B cell (primary cell): ENCODE measurements at regions of chr15 and their contacts with region 1.

Region 1: GRCh38 chr15:75639709-75640482 is at the start of gene IMP3:
- DNase-seq: peak; percentile 96
- ATAC-seq: peak; percentile 93
- H3K4me3 ChIP-seq: peak within 1 kb of the TSS; percentile 72 to 91 (median 84)
- H3K4me3 Mint-ChIP-seq: peak within 1 kb of the TSS; percentile 95
- H3K27ac ChIP-seq: peak within 1 kb of the TSS; percentile 78 to 81
- H3K27ac Mint-ChIP-seq: peak within 1 kb of the TSS; percentile 96
- H3K4me1 ChIP-seq: peaks cover 29 to 36% of the 10 kb centered on the region in 2 donors
- H3K4me1 Mint-ChIP-seq: peaks cover 40% of the 10 kb centered on the region
- H3K27me3 ChIP-seq: peaks cover 0 to 4% (median 0%) of the 10 kb centered on the region in 4 experiments
- H3K27me3 Mint-ChIP-seq: no peaks in the 10 kb centered on the region
- CTCF ChIP-seq: no peak
- total RNA-seq, gene IMP3: 60.8 and 62.9 TPM in 2 replicates

Region 2: DNA sequence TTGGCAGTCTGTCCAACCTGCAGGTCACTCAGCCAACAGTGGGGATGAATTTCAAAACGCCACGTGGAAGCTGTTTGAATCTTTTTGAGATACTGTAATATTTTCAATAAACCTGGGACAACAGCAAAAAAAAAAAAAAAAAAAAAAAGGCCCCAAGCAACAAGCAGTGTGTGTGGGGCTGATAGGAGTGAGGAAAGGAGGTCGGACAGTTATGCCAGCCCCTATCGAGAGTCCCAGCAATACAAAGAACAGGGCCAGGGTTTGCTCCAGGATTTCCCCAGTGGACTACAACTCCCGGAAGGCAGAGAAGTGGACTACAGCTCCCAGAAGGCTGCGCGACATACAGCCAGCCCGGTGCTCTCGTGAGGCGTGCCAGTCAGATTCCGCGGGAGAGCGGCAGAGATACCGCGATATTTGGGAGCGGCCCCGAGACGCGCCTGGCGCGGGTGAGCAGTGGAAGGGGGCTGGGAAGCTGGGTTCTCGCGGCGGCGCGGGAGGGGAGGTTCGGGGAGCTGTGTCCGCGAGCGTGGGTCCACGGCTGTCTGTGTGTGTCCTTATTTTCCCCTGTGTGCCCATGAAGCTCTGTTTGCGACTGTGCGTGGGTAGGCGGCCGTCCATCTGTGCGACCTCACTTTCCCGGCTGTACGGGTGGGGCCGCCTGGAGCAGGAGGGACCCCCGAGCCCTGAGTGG is 616.6 kb before region 1 on chr15 and contains the start of gene PPCDC:
- CTCF ChIA-PET with region 1: no interaction called
- POLR2A ChIA-PET with region 1: no interaction called
- intact Hi-C with region 1: loop called (anchors 10 kb)
- DNase-seq: peak; percentile 93
- ATAC-seq: peak; percentile 100
- H3K4me3 ChIP-seq: peak within 1 kb of the TSS; percentile 72 to 96 (median 94)
- H3K4me3 Mint-ChIP-seq: peak within 1 kb of the TSS; percentile 97
- H3K27ac ChIP-seq: peak within 1 kb of the TSS; percentile 49 to 72
- H3K27ac Mint-ChIP-seq: peak within 1 kb of the TSS; percentile 94
- H3K4me1 ChIP-seq: peaks cover 5 to 18% of the 10 kb centered on the region in 2 donors
- H3K4me1 Mint-ChIP-seq: peaks cover 14% of the 10 kb centered on the region
- H3K27me3 ChIP-seq: peaks cover 0 to 33% (median 15%) of the 10 kb centered on the region in 4 experiments
- H3K27me3 Mint-ChIP-seq: peaks cover 23% of the 10 kb centered on the region
- CTCF ChIP-seq: no peak
- total RNA-seq, gene PPCDC: 14.8 and 15.1 TPM in 2 replicates

Region 3: GRCh38 chr15:75347222-75347878 is 292.5 kb before region 1 on chr15:
- CTCF ChIA-PET with region 1: interaction called, 3 read pairs
- POLR2A ChIA-PET with region 1: no interaction called
- intact Hi-C with region 1: loop called (anchors 1 kb)
- DNase-seq: peak; percentile 97
- ATAC-seq: peak; percentile 80
- H3K4me3 ChIP-seq: peak overlapping the region; percentile 3 to 82 (median 70)
- H3K4me3 Mint-ChIP-seq: peak overlapping the region; percentile 80
- H3K27ac ChIP-seq: peak overlapping the region; percentile 92 to 94
- H3K27ac Mint-ChIP-seq: peak overlapping the region; percentile 94
- H3K4me1 ChIP-seq: peaks cover 31 to 47% of the 10 kb centered on the region in 2 donors
- H3K4me1 Mint-ChIP-seq: peaks cover 45% of the 10 kb centered on the region
- H3K27me3 ChIP-seq: no peaks in the 10 kb centered on the region
- H3K27me3 Mint-ChIP-seq: no peaks in the 10 kb centered on the region
- CTCF ChIP-seq: no peak

Region 4: DNA sequence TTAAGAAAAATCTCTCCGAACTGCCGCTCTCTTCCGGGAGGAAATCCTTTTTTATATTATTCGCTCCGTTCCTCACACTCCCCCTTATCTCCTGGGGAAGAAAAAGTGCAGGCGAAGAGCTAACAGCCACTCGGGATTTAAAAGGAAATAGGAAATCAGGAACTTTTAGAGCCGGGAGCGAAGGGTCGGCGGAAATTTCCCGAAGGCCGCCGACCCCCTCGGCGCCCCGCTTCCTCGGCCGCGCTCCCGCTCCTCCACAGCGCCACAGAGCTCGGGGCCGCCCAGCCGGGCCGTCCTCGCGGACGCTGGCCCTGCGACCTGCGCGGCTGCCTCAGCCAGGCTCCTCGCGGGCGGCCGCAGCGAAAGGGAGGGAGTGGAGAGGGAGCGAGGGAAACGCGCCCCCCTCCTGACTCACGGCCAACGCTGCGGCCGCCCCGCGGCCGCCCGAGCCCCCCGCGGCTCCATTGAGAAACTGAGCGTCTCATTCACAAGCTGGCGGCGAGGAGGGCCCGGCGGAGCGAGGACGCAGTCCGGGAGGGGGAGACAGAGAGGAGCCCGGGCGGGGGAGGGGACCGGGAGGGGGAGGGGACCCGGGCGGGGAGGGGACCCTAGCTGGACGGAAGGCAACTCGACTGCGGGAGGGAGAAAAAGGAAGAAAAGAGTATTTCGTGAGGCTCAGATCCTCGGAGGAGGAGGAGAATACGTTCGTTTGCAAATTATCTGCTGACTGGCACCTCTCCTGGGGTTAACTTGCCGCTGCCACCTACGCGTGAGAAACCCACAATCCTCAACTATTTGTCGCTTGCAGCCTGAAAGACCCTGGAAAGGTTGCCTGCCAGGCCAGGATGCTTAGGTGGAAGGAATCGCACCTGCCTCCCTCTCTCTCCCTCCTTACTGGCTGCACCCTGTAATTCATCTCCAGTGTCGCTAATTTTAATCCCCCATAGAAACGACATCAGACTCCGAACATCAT is 60.7 kb before region 1 on chr15 and contains the start of gene PTPN9:
- CTCF ChIA-PET with region 1: interaction called, 5 read pairs
- POLR2A ChIA-PET with region 1: interaction called, 9 read pairs
- intact Hi-C with region 1: loop called (anchors 1 kb)
- DNase-seq: peak; percentile 74
- ATAC-seq: peak; percentile 83
- H3K4me3 ChIP-seq: peak within 1 kb of the TSS; percentile 67 to 93 (median 70)
- H3K4me3 Mint-ChIP-seq: peak within 1 kb of the TSS; percentile 90
- H3K27ac ChIP-seq: peak within 1 kb of the TSS in 1 of 2 donors; percentile 76
- H3K27ac Mint-ChIP-seq: peak within 1 kb of the TSS; percentile 87
- H3K4me1 ChIP-seq: peaks cover 17 to 18% of the 10 kb centered on the region in 2 donors
- H3K4me1 Mint-ChIP-seq: peaks cover 20% of the 10 kb centered on the region
- H3K27me3 ChIP-seq: no peaks in the 10 kb centered on the region
- H3K27me3 Mint-ChIP-seq: no peaks in the 10 kb centered on the region
- CTCF ChIP-seq: peak; percentile 44
- total RNA-seq, gene PTPN9: 15.5 and 19.9 TPM in 2 replicates

Region 5: GRCh38 chr15:75625542-75626347 is 14.2 kb before region 1 on chr15 and contains the start of gene SNUPN:
- CTCF ChIA-PET with region 1: interaction called, 13 read pairs
- POLR2A ChIA-PET with region 1: interaction called, 38 read pairs
- intact Hi-C with region 1: loop called (anchors 1 kb)
- DNase-seq: peak; percentile 96
- ATAC-seq: peak; percentile 91
- H3K4me3 ChIP-seq: peak within 1 kb of the TSS; percentile 72 to 97 (median 93)
- H3K4me3 Mint-ChIP-seq: peak within 1 kb of the TSS; percentile 91
- H3K27ac ChIP-seq: peak within 1 kb of the TSS; percentile 91 to 97
- H3K27ac Mint-ChIP-seq: peak within 1 kb of the TSS; percentile 95
- H3K4me1 ChIP-seq: peaks cover 7 to 12% of the 10 kb centered on the region in 2 donors
- H3K4me1 Mint-ChIP-seq: peaks cover 13% of the 10 kb centered on the region
- H3K27me3 ChIP-seq: no peaks in the 10 kb centered on the region
- H3K27me3 Mint-ChIP-seq: no peaks in the 10 kb centered on the region
- CTCF ChIP-seq: no peak
- total RNA-seq, gene SNUPN: 19.6 and 23.5 TPM in 2 replicates

Region 6: GRCh38 chr15:75758071-75758872 is 118.4 kb after region 1 on chr15:
- CTCF ChIA-PET with region 1: no interaction called
- POLR2A ChIA-PET with region 1: no interaction called
- intact Hi-C with region 1: loop called (anchors 2 kb)
- DNase-seq: peak; percentile 82
- ATAC-seq: peak; percentile 95
- H3K4me3 ChIP-seq: peak overlapping the region; percentile 21 to 86 (median 75)
- H3K4me3 Mint-ChIP-seq: peak overlapping the region; percentile 94
- H3K27ac ChIP-seq: peak overlapping the region; percentile 80 to 85
- H3K27ac Mint-ChIP-seq: peak overlapping the region; percentile 91
- H3K4me1 ChIP-seq: peaks cover 6 to 10% of the 10 kb centered on the region in 2 donors
- H3K4me1 Mint-ChIP-seq: peaks cover 20% of the 10 kb centered on the region
- H3K27me3 ChIP-seq: no peaks in the 10 kb centered on the region
- H3K27me3 Mint-ChIP-seq: no peaks in the 10 kb centered on the region
- CTCF ChIP-seq: no peak